ENCODE measurements at regions of chr12 and their contacts with region 1.

Region 1: GRCh38 chr12:108803428-108804105 is 53.8 kb downstream of the SSH1 start:
- DNase-seq: peak; percentile 85 to 92
- ATAC-seq: peak; percentile 82 to 86
- H3K4me3 ChIP-seq: no peak overlapping the region
- H3K27ac ChIP-seq: peak overlapping the region; percentile 31 to 68; a peak in 4 of 6 replicates
- H3K4me1 ChIP-seq: peaks cover 6% of the 10 kb centered on the region
- CTCF ChIP-seq: peak; percentile 94
- EP300 ChIP-seq: no peak
- POLR2A ChIP-seq: no peak
- RAD21 ChIP-seq: peak; percentile 94 to 98

Region 2: GRCh38 chr12:108507971-108508642 is 295.5 kb before region 1 on chr12:
- CTCF ChIA-PET with region 1: no interaction called
- POLR2A ChIA-PET with region 1: no interaction called
- DNase-seq: no peak
- ATAC-seq: no peak
- H3K4me3 ChIP-seq: no peak overlapping the region
- H3K27ac ChIP-seq: no peak overlapping the region
- H3K4me1 ChIP-seq: no peaks in the 10 kb centered on the region
- CTCF ChIP-seq: no peak
- EP300 ChIP-seq: no peak
- POLR2A ChIP-seq: no peak
- RAD21 ChIP-seq: no peak

Region 3: DNA sequence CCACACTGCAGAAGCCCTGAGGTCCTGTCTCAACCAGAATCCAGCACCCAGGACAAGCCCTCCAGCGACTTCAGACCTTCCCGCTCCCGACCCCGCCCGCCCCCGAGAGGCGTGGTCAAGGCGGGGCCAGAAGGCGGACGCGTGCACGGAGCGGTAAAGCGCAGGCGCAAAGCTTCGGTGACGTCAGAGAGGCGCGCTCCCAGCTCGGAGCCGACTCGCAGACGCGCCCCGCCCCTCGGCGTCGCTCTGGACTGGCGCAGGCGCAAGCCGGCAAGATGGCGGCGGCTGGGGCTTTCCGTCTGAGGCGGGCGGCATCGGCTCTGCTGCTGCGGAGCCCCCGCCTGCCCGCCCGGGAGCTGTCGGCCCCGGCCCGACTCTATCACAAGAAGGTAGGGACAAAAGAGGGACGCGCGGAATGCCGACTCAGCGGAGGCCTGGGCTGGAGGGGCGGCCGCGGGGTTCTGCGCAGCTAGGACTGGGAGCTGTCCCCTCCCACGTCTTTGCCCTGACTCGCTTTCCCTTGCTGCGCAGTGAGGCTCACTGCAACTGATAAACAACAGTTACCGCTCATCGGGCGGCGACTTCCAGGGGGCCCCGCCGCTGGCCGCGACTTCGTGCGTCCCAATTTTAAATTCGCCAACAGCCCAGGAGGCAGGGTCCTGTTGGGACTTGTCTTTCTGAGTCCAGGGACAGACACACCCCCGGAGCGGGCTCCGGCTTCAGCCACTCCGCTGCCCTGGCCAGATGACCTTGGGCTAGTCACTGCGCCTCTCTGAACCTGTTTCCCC is 241.0 kb before region 1 on chr12 and contains the start of gene ISCU:
- CTCF ChIA-PET with region 1: interaction called, 20 read pairs
- POLR2A ChIA-PET with region 1: no interaction called
- DNase-seq: peak; percentile 93 to 99
- ATAC-seq: peak; percentile 72 to 87
- H3K4me3 ChIP-seq: peak within 1 kb of the TSS; percentile 82
- H3K27ac ChIP-seq: peak within 1 kb of the TSS; percentile 91 to 95
- H3K4me1 ChIP-seq: peaks cover 37% of the 10 kb centered on the region
- CTCF ChIP-seq: no peak
- EP300 ChIP-seq: no peak
- POLR2A ChIP-seq: peak; percentile 97
- RAD21 ChIP-seq: no peak
- polyA plus RNA-seq, gene ISCU: 174 and 177 TPM in 2 replicates

Region 4: DNA sequence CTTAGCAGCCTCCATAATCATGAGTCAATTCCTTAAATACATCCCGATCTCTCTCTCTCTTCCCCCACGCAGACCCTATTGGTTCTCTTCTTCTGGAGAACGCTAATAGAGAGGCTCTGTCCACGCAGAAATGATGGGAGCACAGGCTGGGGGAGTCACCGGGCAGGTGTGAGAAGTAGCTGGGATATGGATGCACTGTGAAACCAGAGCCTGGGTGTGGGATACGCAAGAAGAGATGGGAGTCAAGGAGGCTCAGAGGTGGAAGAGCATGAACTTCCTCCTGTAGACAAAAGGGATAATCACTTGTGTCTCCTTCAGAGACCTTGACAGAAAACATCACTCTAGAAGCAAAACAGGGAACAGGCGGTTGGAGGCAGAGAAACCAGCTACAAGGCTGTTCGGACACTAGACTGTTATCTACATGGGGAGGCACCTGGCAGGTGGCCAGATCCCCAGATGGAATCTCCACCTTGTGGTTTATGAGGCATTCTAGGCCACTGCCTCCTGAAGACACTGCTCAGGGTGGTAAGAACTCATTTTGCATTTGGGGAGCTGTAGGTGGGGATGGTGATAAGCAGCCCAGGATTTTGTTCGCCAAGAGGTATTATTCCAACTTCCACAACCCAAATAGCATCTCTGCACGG is 162.6 kb before region 1 on chr12:
- CTCF ChIA-PET with region 1: interaction called, 14 read pairs
- POLR2A ChIA-PET with region 1: no interaction called
- DNase-seq: no peak
- ATAC-seq: peak in 1 of 2 experiments; percentile 5; a peak in 3 of 6 replicates
- H3K4me3 ChIP-seq: no peak overlapping the region
- H3K27ac ChIP-seq: peak overlapping the region in 1 of 2 experiments; percentile 45; a peak in 1 of 6 replicates
- H3K4me1 ChIP-seq: peaks cover 21% of the 10 kb centered on the region
- CTCF ChIP-seq: no peak
- EP300 ChIP-seq: no peak
- POLR2A ChIP-seq: no peak
- RAD21 ChIP-seq: no peak

Region 5: DNA sequence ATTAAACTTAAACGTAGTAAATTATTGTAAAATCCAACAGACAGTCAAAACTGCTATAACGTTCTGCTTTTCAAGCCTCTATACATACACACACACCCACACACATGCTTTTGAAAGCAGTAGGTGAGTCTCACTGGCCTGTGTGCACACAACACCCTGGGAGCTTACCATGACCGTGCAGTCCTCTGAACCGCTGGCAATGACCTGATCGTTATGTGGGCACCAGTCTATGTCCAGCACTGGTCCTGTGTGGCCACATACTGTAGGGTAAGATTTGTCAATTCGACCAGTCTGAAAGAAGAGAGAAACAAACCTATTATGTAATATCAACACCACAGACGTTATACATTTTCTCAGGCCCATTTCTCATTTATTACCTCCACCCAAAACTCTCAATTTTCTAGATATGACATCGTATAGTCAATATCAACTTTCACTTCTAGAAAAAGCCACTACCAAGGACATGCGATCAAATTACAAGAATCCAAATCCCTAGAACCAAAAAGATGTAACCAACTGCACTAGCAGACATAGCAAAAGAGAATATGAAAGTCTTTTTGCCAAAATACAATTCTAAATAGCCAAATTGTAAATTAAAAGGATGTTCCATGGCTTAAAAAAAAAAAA is 125.3 kb before region 1 on chr12:
- CTCF ChIA-PET with region 1: interaction called, 313 read pairs
- POLR2A ChIA-PET with region 1: no interaction called
- DNase-seq: no peak
- ATAC-seq: peak in 1 of 2 experiments; percentile 34; a peak in 2 of 6 replicates
- H3K4me3 ChIP-seq: no peak overlapping the region
- H3K27ac ChIP-seq: no peak overlapping the region
- H3K4me1 ChIP-seq: peaks cover 10% of the 10 kb centered on the region; the same call in 2 of the 3 replicates
- CTCF ChIP-seq: no peak
- EP300 ChIP-seq: no peak
- POLR2A ChIP-seq: no peak
- RAD21 ChIP-seq: no peak

Region 6: GRCh38 chr12:108768591-108769500 is 34.7 kb before region 1 on chr12:
- CTCF ChIA-PET with region 1: interaction called, 12 read pairs
- POLR2A ChIA-PET with region 1: interaction called, 3 read pairs
- DNase-seq: peak; percentile 71 to 84
- ATAC-seq: peak; percentile 81 to 87
- H3K4me3 ChIP-seq: peak overlapping the region; percentile 42
- H3K27ac ChIP-seq: peak overlapping the region; percentile 61 to 80; a peak in 5 of 6 replicates
- H3K4me1 ChIP-seq: peaks cover 9% of the 10 kb centered on the region
- CTCF ChIP-seq: no peak; the same call in 2 of the 3 replicates
- EP300 ChIP-seq: no peak
- POLR2A ChIP-seq: no peak
- RAD21 ChIP-seq: 0 out of 5 replicates have a peak, but pooled peaks of 1 of the 2 experiments have one; percentile 18

Region 7: DNA sequence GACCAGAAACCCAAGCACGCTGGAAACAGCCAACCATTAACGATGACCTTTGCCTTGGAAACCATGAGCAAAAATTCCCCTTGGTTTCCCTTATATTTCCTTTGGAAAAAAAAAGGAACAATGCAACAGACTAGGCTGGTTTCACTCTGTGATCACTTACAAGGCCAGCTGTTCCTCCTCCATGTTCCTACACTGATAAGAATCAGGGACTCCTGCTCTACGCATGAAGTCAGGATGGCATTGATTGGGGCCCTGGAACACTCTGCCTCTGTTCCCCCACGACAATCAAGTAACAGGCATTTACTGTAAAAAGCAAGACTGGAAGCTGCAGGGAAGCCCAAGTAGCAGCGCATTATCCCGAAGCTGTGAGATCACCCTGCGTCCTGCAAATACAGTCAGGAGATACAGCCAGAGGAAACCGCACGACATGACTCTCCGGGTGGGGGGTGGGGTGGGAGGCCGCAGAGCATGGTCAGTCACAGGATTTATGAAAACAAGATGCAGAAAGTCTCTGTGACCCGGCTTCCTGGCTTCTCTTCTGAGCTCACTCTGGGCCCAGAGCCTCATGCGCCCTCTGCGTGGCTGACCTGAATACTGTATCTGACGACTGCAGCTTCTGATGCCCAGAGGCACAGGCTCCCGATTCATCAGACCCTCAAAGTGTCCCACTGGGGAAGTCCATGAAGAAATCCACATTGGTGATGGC is 22.7 kb after region 1 on chr12:
- CTCF ChIA-PET with region 1: interaction called, 23 read pairs
- POLR2A ChIA-PET with region 1: no interaction called
- DNase-seq: no peak
- ATAC-seq: peak; percentile 51 to 54; a peak in 5 of 6 replicates
- H3K4me3 ChIP-seq: no peak overlapping the region
- H3K27ac ChIP-seq: peak overlapping the region; percentile 44 to 74
- H3K4me1 ChIP-seq: peaks cover 55% of the 10 kb centered on the region
- CTCF ChIP-seq: no peak
- EP300 ChIP-seq: no peak
- POLR2A ChIP-seq: no peak
- RAD21 ChIP-seq: no peak

Region 8: GRCh38 chr12:108850854-108851573 is 47.4 kb after region 1 on chr12:
- CTCF ChIA-PET with region 1: interaction called, 66 read pairs
- POLR2A ChIA-PET with region 1: interaction called, 6 read pairs
- DNase-seq: peak; percentile 89 to 92
- ATAC-seq: peak; percentile 62 to 81
- H3K4me3 ChIP-seq: no peak overlapping the region; the same call in 2 of the 3 replicates
- H3K27ac ChIP-seq: peak overlapping the region; percentile 95
- H3K4me1 ChIP-seq: peaks cover 81% of the 10 kb centered on the region
- CTCF ChIP-seq: peak; percentile 34
- EP300 ChIP-seq: no peak
- POLR2A ChIP-seq: no peak
- RAD21 ChIP-seq: peak in 1 of 2 experiments; percentile 48; a peak in 3 of 5 replicates